Posterior vena cava (tissue), 2 donors: ENCODE measurements at regions of chr15 and their contacts with region 1.

Region 1: GRCh38 chr15:62983956-62984355 is 58.6 kb upstream of the TPM1 start:
- DNase-seq: no peak

Region 2: GRCh38 chr15:62962101-62962995 is 21.6 kb before region 1 on chr15:
- intact Hi-C with region 1: loop called in 1 of 2 experiments (anchors 2 kb)
- DNase-seq: no peak